ENCODE measurements at regions of chr3 and their contacts with region 1.

Region 1: GRCh38 chr3:119676771-119677640 is at the start of gene COX17:
- DNase-seq: peak; percentile 95 to 97 (median 95)
- ATAC-seq: peak; percentile 78 to 90 (median 87)
- H3K4me3 ChIP-seq: peak within 1 kb of the TSS; percentile 38 to 82 (median 70)
- H3K27ac ChIP-seq: peak within 1 kb of the TSS; percentile 93 to 97 (median 96)
- H3K4me1 ChIP-seq: peaks cover 0 to 49% (median 32%) of the 10 kb centered on the region in 12 donors
- H3K27me3 ChIP-seq: no peaks in the 10 kb centered on the region
- CTCF ChIP-seq: no peak
- POLR2A ChIP-seq: peak in 1 of 2 donors; percentile 74
- total RNA-seq, gene COX17: 73.8 to 173 (median 112) TPM

Region 2: GRCh38 chr3:118884748-118885206 is 792.2 kb before region 1 on chr3:
- intact Hi-C with region 1: loop called in 1 of 10 experiments (anchors 5 kb)
- DNase-seq: peak; percentile 39 to 78 (median 67)
- ATAC-seq: peak in 3 of 4 donors; percentile 82 to 90 (median 85)
- H3K4me3 ChIP-seq: no peak overlapping the region
- H3K27ac ChIP-seq: no peak overlapping the region
- H3K4me1 ChIP-seq: peaks cover 0 to 4% (median 0%) of the 10 kb centered on the region in 12 donors
- H3K27me3 ChIP-seq: peaks cover 0 to 20% (median 0%) of the 10 kb centered on the region in 9 donors
- CTCF ChIP-seq: peak; percentile 67 to 90 (median 84)
- POLR2A ChIP-seq: no peak

Region 3: DNA sequence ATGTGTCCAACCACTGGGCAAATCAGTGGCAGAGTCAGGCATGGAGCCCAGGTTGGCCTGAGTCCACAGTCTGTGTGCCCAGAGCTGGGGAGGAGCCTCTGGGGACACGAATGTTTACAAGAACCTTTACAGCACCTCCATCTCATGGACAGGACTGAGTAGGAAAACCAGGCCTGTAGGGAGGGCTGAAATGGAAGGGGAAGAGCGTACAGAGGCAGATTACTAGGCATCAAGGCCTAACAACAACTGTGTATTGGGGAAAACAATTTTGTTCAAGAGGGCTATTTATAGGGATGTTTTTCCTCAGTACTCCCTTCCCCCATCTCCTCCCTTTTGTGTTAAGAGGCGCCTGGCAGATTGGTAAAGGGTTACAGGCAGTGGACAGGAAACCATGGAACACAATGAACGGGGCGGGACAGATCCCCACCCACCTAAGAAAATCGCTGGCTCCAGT is 397.9 kb before region 1 on chr3:
- intact Hi-C with region 1: loop called in 5 of 10 experiments (anchors 5 to 10 kb)
- DNase-seq: peak; percentile 59 to 84 (median 82)
- ATAC-seq: peak; percentile 88 to 94 (median 90)
- H3K4me3 ChIP-seq: peak overlapping the region in 4 of 12 donors; percentile 7 to 21 (median 17)
- H3K27ac ChIP-seq: peak overlapping the region; percentile 59 to 91 (median 82)
- H3K4me1 ChIP-seq: peaks cover 0 to 49% (median 20%) of the 10 kb centered on the region in 12 donors
- H3K27me3 ChIP-seq: no peaks in the 10 kb centered on the region
- CTCF ChIP-seq: no peak
- POLR2A ChIP-seq: no peak

Region 4: DNA sequence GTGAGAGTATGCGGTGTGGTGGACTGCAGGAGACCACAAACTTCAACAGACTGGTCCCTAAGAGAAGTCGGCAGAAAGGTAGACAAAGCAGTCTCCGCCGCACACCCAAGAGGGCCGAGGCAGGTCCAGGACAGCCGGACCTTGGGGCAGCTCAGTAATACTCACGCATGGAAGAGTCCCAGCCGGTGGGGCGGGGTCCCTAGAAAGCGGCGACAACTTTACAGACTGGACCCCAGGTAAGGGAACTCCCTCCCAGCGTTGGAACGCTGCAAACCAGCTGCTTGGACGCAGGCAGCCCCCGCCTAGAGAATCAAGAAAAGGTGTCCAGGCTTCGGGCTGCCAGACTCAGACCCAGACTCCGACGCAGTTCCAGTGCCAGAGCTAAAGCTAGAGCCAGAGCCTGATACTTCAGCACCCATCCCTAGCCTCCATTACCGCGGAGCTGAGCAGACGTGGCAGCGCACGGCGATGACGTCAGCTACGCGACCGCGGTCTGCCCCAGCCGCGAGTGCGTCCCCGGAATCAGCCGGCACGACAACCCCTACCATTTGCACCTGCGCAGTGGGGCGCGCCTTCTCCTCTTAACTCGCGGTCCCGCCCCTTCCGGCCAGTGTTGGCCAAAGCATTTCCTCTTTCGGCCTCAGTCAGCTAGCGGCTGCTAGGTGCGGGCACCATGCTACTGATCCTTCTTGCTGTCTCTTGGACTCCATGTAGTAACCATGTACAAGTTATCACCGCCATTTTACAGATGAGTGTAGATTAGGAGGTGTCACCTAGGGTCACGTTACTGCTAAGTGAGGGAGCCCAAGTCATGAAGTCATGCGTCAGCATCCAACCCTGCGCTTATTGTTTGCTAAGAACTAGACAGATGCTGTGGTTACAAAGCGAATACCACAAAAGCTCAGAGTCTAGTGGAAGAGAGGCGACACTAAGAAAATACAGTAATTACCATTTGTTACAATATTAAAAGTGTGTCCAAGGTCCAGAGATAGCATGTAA is 213.5 kb before region 1 on chr3 and contains the start of gene TMEM39A:
- intact Hi-C with region 1: loop called in 3 of 10 experiments (anchors 5 to 10 kb)
- DNase-seq: peak; percentile 100
- ATAC-seq: peak; percentile 96 to 99 (median 97)
- H3K4me3 ChIP-seq: peak within 1 kb of the TSS; percentile 62 to 100 (median 88)
- H3K27ac ChIP-seq: peak within 1 kb of the TSS; percentile 76 to 95 (median 84)
- H3K4me1 ChIP-seq: peaks cover 0 to 56% (median 19%) of the 10 kb centered on the region in 12 donors
- H3K27me3 ChIP-seq: no peaks in the 10 kb centered on the region
- CTCF ChIP-seq: peak in 4 of 12 donors; percentile 14 to 37 (median 25)
- POLR2A ChIP-seq: peak; percentile 43 to 94
- total RNA-seq, gene TMEM39A: 8.7 to 21.0 (median 15.6) TPM

Region 5: DNA sequence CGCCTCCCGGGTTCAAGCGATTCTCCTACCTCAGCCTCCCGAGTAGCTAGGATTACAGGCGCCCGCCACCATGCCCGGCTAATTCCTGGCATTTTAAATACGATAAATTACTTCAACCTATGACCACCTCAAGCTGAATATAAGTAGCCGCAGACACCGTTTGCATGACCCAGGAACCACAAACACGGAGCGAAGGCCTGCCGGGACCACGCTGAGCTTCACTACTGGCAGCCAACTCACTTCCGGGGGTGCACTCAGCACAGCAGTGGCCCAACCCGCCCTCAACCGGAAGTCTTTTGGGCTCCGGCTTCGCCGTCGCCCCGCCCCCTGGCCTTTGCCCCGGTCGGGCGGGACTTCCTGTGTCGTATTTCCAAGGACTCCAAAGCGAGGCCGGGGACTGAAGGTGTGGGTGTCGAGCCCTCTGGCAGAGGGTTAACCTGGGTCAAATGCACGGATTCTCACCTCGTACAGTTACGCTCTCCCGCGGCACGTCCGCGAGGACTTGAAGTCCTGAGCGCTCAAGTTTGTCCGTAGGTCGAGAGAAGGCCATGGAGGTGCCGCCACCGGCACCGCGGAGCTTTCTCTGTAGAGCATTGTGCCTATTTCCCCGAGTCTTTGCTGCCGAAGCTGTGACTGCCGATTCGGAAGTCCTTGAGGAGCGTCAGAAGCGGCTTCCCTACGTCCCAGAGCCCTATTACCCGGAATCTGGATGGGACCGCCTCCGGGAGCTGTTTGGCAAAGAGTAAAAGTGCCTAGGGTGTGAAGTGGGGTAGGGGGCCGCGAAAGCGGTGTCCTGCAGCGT is 178.6 kb before region 1 on chr3 and contains the start of gene TIMMDC1:
- intact Hi-C with region 1: loop called in 3 of 10 experiments (anchors 1 to 10 kb)
- DNase-seq: peak; percentile 98
- ATAC-seq: peak; percentile 99 to 100 (median 99)
- H3K4me3 ChIP-seq: peak within 1 kb of the TSS; percentile 47 to 93 (median 74)
- H3K27ac ChIP-seq: peak within 1 kb of the TSS; percentile 89 to 98 (median 95)
- H3K4me1 ChIP-seq: peaks cover 9 to 38% (median 27%) of the 10 kb centered on the region in 12 donors
- H3K27me3 ChIP-seq: no peaks in the 10 kb centered on the region
- CTCF ChIP-seq: no peak
- POLR2A ChIP-seq: peak; percentile 81 to 87
- total RNA-seq, gene TIMMDC1: 78.6 to 297 (median 224) TPM

Region 6: GRCh38 chr3:119579366-119580165 is 97.4 kb before region 1 on chr3 and contains the start of gene ADPRH:
- intact Hi-C with region 1: loop called in 5 of 10 experiments (anchors 2 to 5 kb)
- DNase-seq: peak; percentile 86 to 94 (median 91)
- ATAC-seq: peak; percentile 88 to 96 (median 92)
- H3K4me3 ChIP-seq: peak within 1 kb of the TSS; percentile 21 to 78 (median 68)
- H3K27ac ChIP-seq: peak within 1 kb of the TSS; percentile 86 to 99 (median 96)
- H3K4me1 ChIP-seq: peaks cover 0 to 27% (median 14%) of the 10 kb centered on the region in 12 donors
- H3K27me3 ChIP-seq: no peaks in the 10 kb centered on the region
- CTCF ChIP-seq: peak in 2 of 12 donors; percentile 4 to 9
- POLR2A ChIP-seq: peak in 1 of 2 donors; percentile 48
- total RNA-seq, gene ADPRH: 9.7 to 17.5 (median 11.5) TPM

Region 7: GRCh38 chr3:119637679-119638525 is 39.1 kb before region 1 on chr3:
- intact Hi-C with region 1: loop called in 3 of 10 experiments (anchors 2 to 5 kb)
- DNase-seq: no peak
- ATAC-seq: peak; percentile 18 to 69 (median 29)
- H3K4me3 ChIP-seq: peak overlapping the region in 4 of 12 donors; percentile 4 to 12 (median 7)
- H3K27ac ChIP-seq: peak overlapping the region; percentile 69 to 97 (median 85)
- H3K4me1 ChIP-seq: peaks cover 3 to 73% (median 46%) of the 10 kb centered on the region in 12 donors
- H3K27me3 ChIP-seq: no peaks in the 10 kb centered on the region
- CTCF ChIP-seq: no peak
- POLR2A ChIP-seq: no peak

Region 8: DNA sequence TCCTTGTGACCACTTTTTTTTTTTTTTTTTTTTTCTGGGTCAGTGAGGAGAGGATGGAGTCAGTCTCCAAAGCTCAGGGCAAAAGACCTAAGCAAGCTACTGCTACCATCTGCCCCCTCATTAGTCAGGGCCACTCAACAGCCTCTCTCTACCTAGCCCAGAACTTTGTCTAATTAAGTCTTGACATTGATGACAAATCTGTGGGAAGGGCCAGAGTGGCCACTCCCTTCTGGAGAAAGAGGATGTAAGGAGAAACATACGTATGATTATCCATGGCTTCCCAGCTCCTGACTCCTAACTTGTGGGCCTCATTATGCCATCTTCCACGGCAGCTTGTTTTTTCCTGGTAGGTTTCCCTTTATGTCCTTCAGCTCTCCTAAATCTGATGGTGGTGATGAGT is 142.8 kb after region 1 on chr3:
- intact Hi-C with region 1: no loop called
- DNase-seq: no peak
- ATAC-seq: no peak
- H3K4me3 ChIP-seq: no peak overlapping the region
- H3K27ac ChIP-seq: no peak overlapping the region
- H3K4me1 ChIP-seq: peaks cover 0 to 10% (median 0%) of the 10 kb centered on the region in 12 donors
- H3K27me3 ChIP-seq: no peaks in the 10 kb centered on the region
- CTCF ChIP-seq: no peak
- POLR2A ChIP-seq: no peak

Measured in heart left ventricle (tissue), 16 donors.